HEK293 (cell line): ENCODE measurements at regions of chr3 and their contacts with region 1.

Region 1: GRCh38 chr3:160956806-160957205 is 148.3 kb downstream of the B3GALNT1 start:
- H3K4me3 ChIP-seq: no peak overlapping the region
- H3K27ac ChIP-seq: no peak overlapping the region
- H3K4me1 ChIP-seq: no peaks in the 10 kb centered on the region; the same call in none of the 2 replicates
- CTCF ChIP-seq: no peak

Region 2: DNA sequence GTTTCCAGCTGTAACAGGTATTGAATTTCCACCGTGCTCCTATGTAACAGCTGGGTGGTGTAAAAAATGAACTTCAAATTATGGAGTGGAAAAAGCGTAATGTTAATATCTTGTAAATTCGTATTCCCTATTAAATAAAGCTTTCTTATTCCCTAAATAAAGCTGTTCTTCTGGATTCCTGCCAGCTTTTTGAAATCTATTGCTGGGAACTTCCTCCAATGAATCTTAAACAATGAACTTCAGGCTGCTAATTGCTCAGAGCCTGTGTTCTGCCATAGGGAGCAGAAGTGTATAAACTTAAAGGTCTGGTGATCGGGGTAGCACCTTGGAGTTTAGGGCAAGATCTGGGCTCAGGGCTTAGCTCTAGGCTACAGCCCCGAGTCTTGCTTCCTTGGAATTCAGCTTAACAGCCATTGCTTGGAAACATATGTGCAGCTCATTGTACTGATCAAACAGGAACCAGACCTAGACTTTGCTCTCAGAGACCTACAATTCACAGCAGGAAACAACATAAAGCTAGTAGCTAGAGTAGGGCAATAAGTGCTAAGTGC is 278.4 kb before region 1 on chr3:
- CTCF ChIA-PET with region 1: interaction called, 11 read pairs
- POLR2A ChIA-PET with region 1: no interaction called
- H3K4me3 ChIP-seq: no peak overlapping the region
- H3K27ac ChIP-seq: no peak overlapping the region
- H3K4me1 ChIP-seq: peaks cover 4% of the 10 kb centered on the region
- CTCF ChIP-seq: no peak